Right cardiac atrium (tissue), 5 donors: ENCODE measurements at regions of chr5 and their contacts with region 1.

Region 1: DNA sequence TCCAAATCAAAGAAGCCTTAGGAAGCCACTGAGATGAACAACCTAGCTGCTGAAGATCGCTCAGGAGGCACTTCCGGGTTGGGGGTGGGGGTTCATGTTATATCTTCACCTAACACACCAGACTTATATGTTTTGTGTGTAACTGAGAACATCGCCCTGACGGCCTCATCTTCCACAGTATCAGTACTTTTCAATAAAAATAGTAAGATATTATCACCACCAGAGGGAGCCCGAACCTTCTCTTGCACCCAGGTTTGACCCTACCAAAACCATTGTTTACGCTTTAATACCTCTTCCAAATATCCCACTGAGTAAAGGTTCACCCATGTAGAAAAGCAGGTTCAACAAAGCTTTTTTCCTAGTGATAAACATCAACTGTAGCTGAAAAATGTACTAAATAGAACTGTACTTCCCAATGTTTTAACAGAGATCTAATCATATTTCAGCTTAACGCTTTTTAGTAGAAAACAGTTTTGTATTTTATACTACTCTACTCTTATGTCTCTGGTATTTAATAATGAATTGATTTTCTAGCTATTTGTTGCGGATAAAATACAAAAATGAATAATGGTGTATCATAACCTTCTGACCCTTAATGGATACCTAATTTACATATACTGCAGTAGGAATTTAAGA is 244.0 kb downstream of the EPB41L4A start:
- DNase-seq: peak in 2 of 3 donors; percentile 21 to 44
- ATAC-seq: peak; percentile 71 to 78
- H3K4me3 ChIP-seq: no peak overlapping the region
- H3K27ac ChIP-seq: no peak overlapping the region
- H3K4me1 ChIP-seq: no peaks in the 10 kb centered on the region
- H3K27me3 ChIP-seq: no peaks in the 10 kb centered on the region

Region 2: GRCh38 chr5:112196584-112196983 is 21.5 kb after region 1 on chr5:
- intact Hi-C with region 1: no loop called
- DNase-seq: no peak
- ATAC-seq: peak in 1 of 2 donors; percentile 16
- H3K4me3 ChIP-seq: no peak overlapping the region
- H3K27ac ChIP-seq: no peak overlapping the region
- H3K4me1 ChIP-seq: no peaks in the 10 kb centered on the region
- H3K27me3 ChIP-seq: no peaks in the 10 kb centered on the region

Region 3: DNA sequence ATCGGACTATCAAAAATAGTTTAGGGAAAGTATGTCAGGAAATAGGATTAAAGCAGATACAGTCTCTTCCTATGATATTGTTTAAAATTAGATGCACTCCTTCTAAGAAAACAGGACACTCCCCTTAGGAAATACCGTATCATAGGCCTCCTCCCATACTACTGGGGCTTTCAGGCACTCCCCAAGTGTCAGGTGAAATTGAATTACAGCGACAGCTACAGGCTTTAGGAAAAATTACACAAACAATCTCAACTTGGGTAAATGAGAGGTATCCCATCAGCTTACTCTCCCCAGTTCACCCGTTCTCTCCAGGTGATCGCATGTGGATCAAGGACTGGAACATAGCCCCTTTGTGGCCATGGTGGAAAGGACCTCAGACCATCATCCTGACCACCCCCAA is 354.4 kb after region 1 on chr5:
- intact Hi-C with region 1: loop called in 1 of 4 experiments (anchors 10 kb)
- DNase-seq: no peak
- ATAC-seq: peak in 1 of 2 donors; percentile 82
- H3K4me3 ChIP-seq: no peak overlapping the region
- H3K27ac ChIP-seq: no peak overlapping the region
- H3K4me1 ChIP-seq: peaks cover 5% of the 10 kb centered on the region
- H3K27me3 ChIP-seq: no peaks in the 10 kb centered on the region